A673 (cell line): ENCODE measurements at regions of chr2 and their contacts with region 1.

Region 1: DNA sequence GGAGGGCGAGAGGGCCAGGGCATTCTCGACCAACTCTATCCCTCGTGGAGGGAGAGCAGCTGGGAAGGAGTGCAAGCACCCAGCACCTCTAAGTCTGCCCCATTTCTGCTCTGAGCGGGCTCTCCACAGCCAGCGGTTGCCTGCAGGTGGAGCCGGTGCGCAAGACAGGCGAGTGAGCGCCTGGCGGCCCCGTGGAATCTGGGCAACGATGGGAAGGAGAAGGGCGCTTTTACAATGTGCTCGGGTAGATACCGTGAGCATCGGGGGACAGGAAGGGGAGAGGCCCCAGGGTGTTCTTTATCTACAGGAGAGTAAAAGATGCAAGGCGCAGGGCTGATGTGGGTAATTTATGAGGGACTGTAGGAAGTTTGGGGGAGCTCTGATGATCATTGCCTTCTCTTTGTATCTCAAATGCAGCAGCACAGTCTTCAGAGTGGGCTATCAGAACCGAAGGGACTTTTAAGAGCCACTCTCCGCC is 867 bp upstream of the TTL start:
- DNase-seq: peak; percentile 94
- H3K4me3 ChIP-seq: peak overlapping the region; percentile 92
- H3K27ac ChIP-seq: peak overlapping the region; percentile 76
- H3K4me1 ChIP-seq: peaks cover 8% of the 10 kb centered on the region
- H3K27me3 ChIP-seq: no peaks in the 10 kb centered on the region
- CTCF ChIP-seq: peak; percentile 96

Region 2: DNA sequence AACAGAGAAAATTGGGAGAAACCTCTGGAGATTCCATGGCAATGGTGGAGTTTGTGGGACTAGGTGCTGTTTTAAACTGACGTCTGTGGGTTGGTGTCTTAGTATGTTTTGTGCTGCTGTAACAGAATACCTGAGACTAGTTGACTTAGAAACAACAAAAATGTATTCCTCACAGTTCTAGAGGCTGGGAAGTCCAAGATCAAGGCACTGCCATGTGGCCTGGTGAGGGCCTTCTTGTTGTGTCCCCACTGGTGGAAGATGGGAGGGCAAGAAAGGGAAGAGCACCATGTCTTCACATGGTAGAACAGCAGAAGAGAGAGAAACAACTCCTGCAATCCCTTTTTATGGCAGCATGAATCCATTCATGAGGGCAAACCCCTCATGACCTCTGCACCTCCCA is 212.5 kb before region 1 on chr2:
- CTCF ChIA-PET with region 1: no interaction called
- POLR2A ChIA-PET with region 1: no interaction called
- intact Hi-C with region 1: no loop called
- DNase-seq: no peak
- H3K4me3 ChIP-seq: no peak overlapping the region
- H3K27ac ChIP-seq: no peak overlapping the region
- H3K4me1 ChIP-seq: peaks cover 3% of the 10 kb centered on the region
- H3K27me3 ChIP-seq: no peaks in the 10 kb centered on the region
- CTCF ChIP-seq: no peak

Region 3: DNA sequence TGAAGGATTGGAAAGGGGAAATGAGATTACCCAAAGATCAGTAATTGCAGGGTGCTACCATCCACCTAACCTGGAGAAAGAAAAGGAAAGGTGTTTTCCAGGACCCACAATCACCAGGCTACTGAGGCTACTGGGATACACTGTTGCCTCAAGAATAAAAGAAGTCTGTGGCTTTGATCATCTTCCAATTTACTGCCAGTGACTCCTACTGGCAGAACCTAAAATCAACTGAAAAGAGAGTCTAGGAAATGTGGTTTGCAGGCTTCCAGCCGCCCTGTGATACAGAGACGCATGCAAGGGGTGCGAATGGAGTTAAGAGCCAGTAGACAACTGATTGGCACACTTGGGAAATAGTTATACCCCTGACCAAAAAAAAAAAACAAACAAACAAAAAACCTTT is 15.7 kb before region 1 on chr2:
- CTCF ChIA-PET with region 1: no interaction called
- POLR2A ChIA-PET with region 1: no interaction called
- intact Hi-C with region 1: no loop called
- DNase-seq: peak; percentile 14
- H3K4me3 ChIP-seq: no peak overlapping the region
- H3K27ac ChIP-seq: no peak overlapping the region
- H3K4me1 ChIP-seq: no peaks in the 10 kb centered on the region
- H3K27me3 ChIP-seq: no peaks in the 10 kb centered on the region
- CTCF ChIP-seq: peak; percentile 42

Region 4: DNA sequence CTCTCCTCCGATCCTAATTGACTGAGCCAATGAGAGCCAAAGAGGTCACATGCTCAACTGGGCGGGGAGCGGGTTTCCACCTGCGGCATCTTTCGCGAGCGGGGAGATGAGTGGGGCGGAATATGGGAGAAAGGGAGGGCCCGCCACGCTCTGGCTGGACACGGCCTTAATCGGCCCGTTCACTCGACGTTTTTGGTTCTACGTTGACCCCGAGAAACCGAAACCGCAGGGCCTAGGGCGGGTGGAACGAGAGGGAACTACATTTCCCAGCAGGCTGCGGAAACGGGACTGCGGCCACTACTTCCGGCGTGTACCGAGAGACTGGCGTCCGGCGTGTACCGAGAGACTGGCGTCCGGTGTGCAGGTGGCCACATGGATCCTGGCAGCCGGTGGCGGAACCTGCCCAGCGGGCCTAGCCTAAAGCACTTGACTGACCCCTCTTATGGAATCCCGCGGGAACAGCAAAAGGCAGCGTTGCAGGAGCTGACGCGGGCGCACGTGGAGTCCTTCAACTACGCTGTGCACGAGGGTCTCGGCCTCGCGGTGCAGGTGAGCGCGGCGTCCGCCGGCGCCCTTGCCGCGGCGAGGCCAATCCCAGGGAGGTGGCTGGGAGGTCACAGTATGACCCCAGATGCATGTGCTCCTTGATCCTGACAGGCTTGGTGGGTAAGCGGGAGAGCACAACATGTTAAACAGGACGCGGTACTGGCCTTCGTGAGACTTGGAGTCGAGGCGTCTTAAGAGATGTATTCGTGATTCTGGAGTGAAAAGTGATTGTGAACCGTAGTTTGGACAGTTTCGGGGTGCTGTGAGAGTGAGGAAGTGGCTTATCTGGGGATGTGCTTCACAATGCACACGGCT is 61.3 kb after region 1 on chr2 and contains the start of gene POLR1B:
- CTCF ChIA-PET with region 1: no interaction called
- POLR2A ChIA-PET with region 1: no interaction called
- intact Hi-C with region 1: loop called (anchors 2 kb)
- DNase-seq: peak; percentile 88
- H3K4me3 ChIP-seq: peak within 1 kb of the TSS; percentile 78
- H3K27ac ChIP-seq: peak within 1 kb of the TSS; percentile 92
- H3K4me1 ChIP-seq: peaks cover 14% of the 10 kb centered on the region
- H3K27me3 ChIP-seq: no peaks in the 10 kb centered on the region
- CTCF ChIP-seq: no peak
- total RNA-seq, gene POLR1B: 53.9 and 70.0 TPM in 2 replicates

Region 5: GRCh38 chr2:112579241-112579640 is 98.2 kb after region 1 on chr2:
- CTCF ChIA-PET with region 1: interaction called, 13 read pairs
- POLR2A ChIA-PET with region 1: no interaction called
- intact Hi-C with region 1: loop called (anchors 1 kb)
- DNase-seq: peak; percentile 71
- H3K4me3 ChIP-seq: no peak overlapping the region
- H3K27ac ChIP-seq: no peak overlapping the region
- H3K4me1 ChIP-seq: peaks cover 17% of the 10 kb centered on the region
- H3K27me3 ChIP-seq: no peaks in the 10 kb centered on the region
- CTCF ChIP-seq: no peak